ENCODE measurements at regions of chr15 and their contacts with region 1.

Region 1: GRCh38 chr15:41416742-41417406 is at the start of gene RTF1:
- DNase-seq: peak; percentile 94 to 99 (median 98)
- ATAC-seq: peak; percentile 98
- H3K4me3 ChIP-seq: peak within 1 kb of the TSS; percentile 79 to 91
- H3K4me3 Mint-ChIP-seq: peak within 1 kb of the TSS; percentile 93
- H3K27ac ChIP-seq: peak within 1 kb of the TSS; percentile 64 to 76
- H3K27ac Mint-ChIP-seq: peak within 1 kb of the TSS; percentile 94
- H3K4me1 ChIP-seq: peaks cover 30% of the 10 kb centered on the region
- H3K4me1 Mint-ChIP-seq: peaks cover 43% of the 10 kb centered on the region
- H3K27me3 ChIP-seq: no peaks in the 10 kb centered on the region
- H3K27me3 Mint-ChIP-seq: no peaks in the 10 kb centered on the region
- CTCF ChIP-seq: no peak
- total RNA-seq, gene RTF1: 33.2 to 41.6 TPM

Region 2: DNA sequence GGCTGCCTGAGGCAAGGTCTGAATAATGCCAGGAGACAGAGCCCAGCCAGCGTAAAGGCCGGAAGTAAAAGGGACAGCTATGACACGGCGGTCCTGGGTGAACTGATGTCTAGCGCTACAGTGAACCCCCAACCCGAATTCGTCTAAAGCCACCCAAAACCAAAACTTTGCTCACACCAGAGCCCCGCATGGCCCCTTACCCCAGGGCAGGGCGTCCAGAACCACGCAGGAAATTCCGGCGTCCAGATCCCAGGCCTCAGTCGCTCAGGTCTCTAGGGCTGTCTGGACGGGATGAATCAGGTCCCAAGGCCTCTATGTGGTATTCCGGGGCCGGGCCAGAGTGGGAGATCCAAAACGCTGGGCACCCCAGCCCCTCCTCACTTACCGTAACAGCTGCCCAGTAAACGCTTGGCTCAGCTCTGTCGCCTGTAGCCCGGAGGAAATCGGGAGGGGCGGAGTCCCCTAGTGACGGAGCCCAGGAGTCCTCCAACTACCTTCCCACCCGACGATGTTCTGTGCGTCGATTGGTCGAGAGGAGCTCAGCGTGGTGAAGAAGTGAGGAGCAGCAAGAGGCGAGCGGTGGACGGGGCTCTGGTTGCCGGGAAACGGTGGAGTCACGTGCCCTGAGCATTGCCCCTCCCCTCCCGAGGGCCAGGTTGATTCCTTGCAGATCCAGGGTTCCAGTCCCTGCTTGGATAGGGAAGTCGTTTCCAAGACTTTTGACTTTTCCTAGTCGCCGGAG is 852.1 kb before region 1 on chr15 and contains the start of gene CCDC32:
- CTCF ChIA-PET with region 1: no interaction called
- POLR2A ChIA-PET with region 1: no interaction called
- intact Hi-C with region 1: loop called (anchors 10 kb)
- DNase-seq: peak; percentile 84 to 99 (median 94)
- ATAC-seq: peak; percentile 90
- H3K4me3 ChIP-seq: peak within 1 kb of the TSS; percentile 89 to 97
- H3K4me3 Mint-ChIP-seq: peak within 1 kb of the TSS; percentile 95
- H3K27ac ChIP-seq: peak within 1 kb of the TSS; percentile 87 to 97
- H3K27ac Mint-ChIP-seq: peak within 1 kb of the TSS; percentile 97
- H3K4me1 ChIP-seq: peaks cover 11% of the 10 kb centered on the region
- H3K4me1 Mint-ChIP-seq: peaks cover 52% of the 10 kb centered on the region
- H3K27me3 ChIP-seq: no peaks in the 10 kb centered on the region
- H3K27me3 Mint-ChIP-seq: no peaks in the 10 kb centered on the region
- CTCF ChIP-seq: no peak
- total RNA-seq, gene CCDC32: 18.3 to 20.3 TPM

Region 3: GRCh38 chr15:41283653-41284426 is 133.0 kb before region 1 on chr15:
- CTCF ChIA-PET with region 1: no interaction called
- POLR2A ChIA-PET with region 1: no interaction called
- intact Hi-C with region 1: loop called (anchors 5 kb)
- DNase-seq: peak; percentile 94 to 100 (median 97)
- ATAC-seq: peak; percentile 96
- H3K4me3 ChIP-seq: peak overlapping the region; percentile 70 to 86
- H3K4me3 Mint-ChIP-seq: peak overlapping the region; percentile 89
- H3K27ac ChIP-seq: peak overlapping the region; percentile 91 to 93
- H3K27ac Mint-ChIP-seq: peak overlapping the region; percentile 95
- H3K4me1 ChIP-seq: peaks cover 25% of the 10 kb centered on the region
- H3K4me1 Mint-ChIP-seq: peaks cover 48% of the 10 kb centered on the region
- H3K27me3 ChIP-seq: no peaks in the 10 kb centered on the region
- H3K27me3 Mint-ChIP-seq: no peaks in the 10 kb centered on the region
- CTCF ChIP-seq: no peak

Region 4: GRCh38 chr15:41401904-41402267 is 15.0 kb before region 1 on chr15:
- CTCF ChIA-PET with region 1: interaction called, 3 read pairs
- POLR2A ChIA-PET with region 1: interaction called, 3 read pairs
- intact Hi-C with region 1: loop called (anchors 1 kb)
- DNase-seq: no peak
- ATAC-seq: no peak
- H3K4me3 ChIP-seq: peak overlapping the region; percentile 81 to 95
- H3K4me3 Mint-ChIP-seq: peak overlapping the region; percentile 96
- H3K27ac ChIP-seq: peak overlapping the region; percentile 81 to 84
- H3K27ac Mint-ChIP-seq: peak overlapping the region; percentile 96
- H3K4me1 ChIP-seq: peaks cover 10% of the 10 kb centered on the region
- H3K4me1 Mint-ChIP-seq: peaks cover 23% of the 10 kb centered on the region
- H3K27me3 ChIP-seq: no peaks in the 10 kb centered on the region
- H3K27me3 Mint-ChIP-seq: no peaks in the 10 kb centered on the region
- CTCF ChIP-seq: no peak

Region 5: DNA sequence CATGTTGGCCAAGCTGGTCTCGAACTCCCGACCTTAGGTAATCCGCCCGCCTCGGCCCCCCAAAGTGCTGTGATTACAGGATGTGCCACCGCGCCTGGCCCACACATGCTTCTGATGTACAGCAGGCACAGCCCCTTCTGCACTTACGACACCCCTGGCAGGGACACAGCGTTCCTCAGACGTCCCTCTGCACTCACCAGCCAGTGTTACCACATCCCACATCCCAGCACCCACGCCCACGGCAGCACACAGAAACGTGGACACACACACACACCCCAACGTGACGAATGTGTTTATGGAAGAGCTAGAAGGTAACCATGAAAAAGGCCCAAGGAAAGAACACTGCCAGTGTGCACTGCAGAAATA is 127.8 kb after region 1 on chr15:
- CTCF ChIA-PET with region 1: no interaction called
- POLR2A ChIA-PET with region 1: no interaction called
- intact Hi-C with region 1: loop called in 1 of 2 experiments (anchors 5 kb)
- DNase-seq: peak in 7 of 9 experiments; percentile 16 to 61 (median 55)
- ATAC-seq: peak; percentile 30
- H3K4me3 ChIP-seq: peak overlapping the region; percentile 88 to 95
- H3K4me3 Mint-ChIP-seq: peak overlapping the region; percentile 91
- H3K27ac ChIP-seq: peak overlapping the region in 1 of 2 experiments; percentile 64
- H3K27ac Mint-ChIP-seq: peak overlapping the region; percentile 95
- H3K4me1 ChIP-seq: peaks cover 8% of the 10 kb centered on the region
- H3K4me1 Mint-ChIP-seq: peaks cover 18% of the 10 kb centered on the region
- H3K27me3 ChIP-seq: no peaks in the 10 kb centered on the region
- H3K27me3 Mint-ChIP-seq: no peaks in the 10 kb centered on the region
- CTCF ChIP-seq: no peak